Colonic mucosa (tissue), 4 donors: ENCODE measurements at regions of chr4 and their contacts with region 1.

Region 1: GRCh38 chr4:8547108-8547970 is 32.9 kb upstream of the GPR78 start:
- DNase-seq: no peak
- H3K4me3 ChIP-seq: no peak overlapping the region
- H3K27ac ChIP-seq: no peak overlapping the region
- H3K4me1 ChIP-seq: no peaks in the 10 kb centered on the region
- H3K27me3 ChIP-seq: no peaks in the 10 kb centered on the region
- CTCF ChIP-seq: peak; percentile 36

Region 2: DNA sequence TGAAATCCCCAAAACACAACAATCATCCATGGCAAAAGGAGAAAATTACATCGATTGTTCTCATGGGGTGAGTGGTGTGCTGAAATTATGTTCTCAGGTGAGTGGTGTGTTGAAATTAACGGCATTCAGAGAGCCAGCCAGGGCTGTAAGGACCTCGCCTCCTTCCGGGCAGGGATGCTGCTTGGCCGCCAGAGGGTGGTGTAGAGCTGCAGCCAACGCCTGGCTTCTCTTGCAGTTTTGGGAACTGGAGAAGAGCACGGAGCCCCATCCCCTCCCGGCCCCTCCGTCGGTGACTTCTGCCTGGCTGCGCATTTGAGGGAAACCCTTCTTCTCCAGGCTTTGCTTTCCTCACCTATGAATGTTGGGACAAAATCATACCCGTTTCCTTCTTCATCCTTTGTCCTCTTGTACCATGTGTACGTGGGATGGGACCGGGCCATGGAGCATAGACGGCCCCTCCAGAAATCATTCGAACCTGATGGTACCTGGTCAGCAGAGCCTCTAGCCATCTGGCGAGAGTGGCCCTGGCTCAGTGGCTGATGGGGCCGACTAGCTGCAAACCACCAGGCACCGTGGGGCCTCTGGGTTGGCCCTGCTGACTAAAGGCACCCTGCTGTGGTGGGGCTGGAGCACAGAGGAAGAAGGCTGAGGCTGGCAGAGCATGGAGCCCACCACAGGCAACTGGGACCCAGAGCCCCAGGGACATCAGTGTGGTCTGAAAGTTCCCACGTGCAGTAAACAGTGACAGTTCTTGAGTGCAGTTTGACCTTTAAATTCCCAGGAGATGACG is 78.4 kb before region 1 on chr4:
- intact Hi-C with region 1: loop called (anchors 2 kb)
- DNase-seq: peak; percentile 57
- H3K4me3 ChIP-seq: no peak overlapping the region
- H3K27ac ChIP-seq: no peak overlapping the region
- H3K4me1 ChIP-seq: no peaks in the 10 kb centered on the region
- H3K27me3 ChIP-seq: no peaks in the 10 kb centered on the region
- CTCF ChIP-seq: peak; percentile 79

Region 3: GRCh38 chr4:8739820-8740665 is 192.7 kb after region 1 on chr4:
- intact Hi-C with region 1: no loop called
- DNase-seq: no peak
- H3K4me3 ChIP-seq: no peak overlapping the region
- H3K27ac ChIP-seq: no peak overlapping the region
- H3K4me1 ChIP-seq: no peaks in the 10 kb centered on the region
- H3K27me3 ChIP-seq: no peaks in the 10 kb centered on the region
- CTCF ChIP-seq: no peak